H1 (cell line): ENCODE measurements at regions of chr20 and their contacts with region 1.

Region 1: GRCh38 chr20:973785-974194 is 28.3 kb downstream of the RSPO4 start:
- DNase-seq: no peak
- H3K4me3 ChIP-seq: no peak overlapping the region
- H3K27ac ChIP-seq: no peak overlapping the region
- H3K4me1 ChIP-seq: no peaks in the 10 kb centered on the region
- H3K27me3 ChIP-seq: no peaks in the 10 kb centered on the region
- CTCF ChIP-seq: peak; percentile 60 to 76 (median 67)
- EP300 ChIP-seq: no peak
- POLR2A ChIP-seq: no peak
- RAD21 ChIP-seq: peak; percentile 72 to 74

Region 2: GRCh38 chr20:986733-987355 is 13.1 kb after region 1 on chr20:
- CTCF ChIA-PET with region 1: interaction called, 18 read pairs
- POLR2A ChIA-PET with region 1: interaction called, 5 read pairs
- DNase-seq: no peak
- H3K4me3 ChIP-seq: no peak overlapping the region
- H3K27ac ChIP-seq: no peak overlapping the region
- H3K4me1 ChIP-seq: peaks cover 0 to 9% (median 3%) of the 10 kb centered on the region in 4 experiments; a peak in 4 of 7 replicates
- H3K27me3 ChIP-seq: no peaks in the 10 kb centered on the region; a peak in 1 of 7 replicates
- CTCF ChIP-seq: no peak
- EP300 ChIP-seq: no peak
- POLR2A ChIP-seq: no peak
- RAD21 ChIP-seq: no peak